Activated CD4-positive, alpha-beta T cell treated with anti-CD3 and anti-CD28 coated beads for 36 hours (primary cell): ENCODE measurements at regions of chr15 and their contacts with region 1.

Region 1: GRCh38 chr15:76139368-76140073 is 79.7 kb downstream of the TMEM266 start:
- DNase-seq: peak; percentile 88
- ATAC-seq: peak; percentile 94
- H3K4me3 Mint-ChIP-seq: no peak overlapping the region
- H3K27ac Mint-ChIP-seq: no peak overlapping the region
- H3K4me1 Mint-ChIP-seq: peaks cover 10% of the 10 kb centered on the region
- H3K27me3 Mint-ChIP-seq: peaks cover 25% of the 10 kb centered on the region

Region 2: DNA sequence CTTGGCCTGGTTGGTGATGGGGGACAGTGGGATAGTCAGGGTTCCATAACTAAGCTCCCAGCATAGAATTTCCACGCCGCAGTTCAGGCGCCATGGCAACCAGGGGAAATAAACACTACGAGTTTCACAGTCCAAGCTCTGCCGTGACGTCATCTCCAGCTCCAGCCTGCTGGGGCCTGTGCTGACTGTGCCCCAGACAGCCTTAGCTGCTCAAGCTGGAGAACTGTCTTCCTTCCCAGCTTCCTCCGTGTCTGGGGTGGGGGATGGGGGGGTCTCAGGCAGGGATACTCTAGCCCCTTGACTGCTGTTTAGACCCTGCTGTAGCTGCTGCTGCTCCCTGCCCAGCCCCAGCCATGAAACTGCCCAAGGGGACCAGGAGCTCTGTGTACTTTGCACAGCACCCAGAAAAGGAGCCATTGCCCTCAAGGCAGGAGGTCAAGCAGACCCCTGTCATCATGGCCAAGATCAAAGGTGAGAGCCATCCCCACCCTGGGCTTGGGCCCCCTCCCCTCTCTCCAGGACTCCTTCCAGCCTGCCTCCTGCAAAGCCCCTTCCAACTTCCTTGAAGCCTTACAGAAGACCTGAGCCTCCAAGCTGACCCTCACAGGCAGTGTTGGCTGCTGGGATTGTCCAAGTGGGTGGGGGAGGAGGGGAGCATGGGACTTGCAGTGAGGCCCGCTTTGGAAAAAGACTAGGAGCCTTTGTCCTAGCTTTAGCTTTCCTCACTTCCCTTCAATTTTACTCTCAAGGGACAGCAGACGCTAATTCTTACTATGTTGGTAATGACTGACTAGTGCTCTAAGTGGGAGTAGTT is 415.5 kb before region 1 on chr15:
- CTCF ChIA-PET with region 1: interaction called, 4 read pairs
- POLR2A ChIA-PET with region 1: no interaction called
- intact Hi-C with region 1: loop called in 1 of 2 experiments (anchors 2 kb)
- DNase-seq: peak; percentile 73
- ATAC-seq: peak; percentile 53
- H3K4me3 Mint-ChIP-seq: no peak overlapping the region
- H3K27ac Mint-ChIP-seq: no peak overlapping the region
- H3K4me1 Mint-ChIP-seq: peaks cover 8% of the 10 kb centered on the region
- H3K27me3 Mint-ChIP-seq: peaks cover 9% of the 10 kb centered on the region

Region 3: GRCh38 chr15:75809986-75810750 is 329.4 kb before region 1 on chr15:
- CTCF ChIA-PET with region 1: interaction called, 6 read pairs
- POLR2A ChIA-PET with region 1: no interaction called
- intact Hi-C with region 1: loop called in 1 of 2 experiments (anchors 1 kb)
- DNase-seq: peak; percentile 33
- ATAC-seq: no peak
- H3K4me3 Mint-ChIP-seq: no peak overlapping the region
- H3K27ac Mint-ChIP-seq: no peak overlapping the region
- H3K4me1 Mint-ChIP-seq: no peaks in the 10 kb centered on the region
- H3K27me3 Mint-ChIP-seq: no peaks in the 10 kb centered on the region

Region 4: DNA sequence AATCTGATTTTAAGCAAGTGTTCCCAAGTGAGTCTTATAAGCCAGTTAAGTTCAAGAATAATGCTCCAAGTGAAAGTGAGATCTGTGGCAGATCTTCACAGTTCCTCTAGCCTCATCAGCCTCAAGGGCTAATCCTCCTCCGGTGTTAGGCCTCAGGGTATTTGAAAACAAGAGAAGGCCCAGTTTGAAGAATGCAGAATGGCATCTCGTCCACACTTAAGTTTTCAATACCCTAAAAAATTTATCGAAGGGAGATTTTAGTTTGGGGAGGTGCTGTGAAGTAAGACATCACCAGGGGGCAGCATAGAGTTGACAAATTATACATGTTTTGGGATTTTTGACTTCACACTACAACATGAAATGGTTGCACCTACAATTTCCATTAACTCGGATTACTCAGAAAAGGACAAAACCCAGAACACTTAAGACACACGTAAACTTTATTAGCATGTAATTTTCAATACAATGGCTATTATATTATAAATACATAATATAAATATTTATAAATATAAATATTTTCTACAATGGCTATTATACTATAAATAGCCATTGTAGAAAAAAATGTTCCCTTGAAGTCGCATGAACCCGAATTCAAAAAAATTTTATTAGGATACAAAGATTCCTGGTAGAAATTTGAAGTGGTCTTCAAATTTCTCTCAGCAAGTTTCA is 82.1 kb before region 1 on chr15:
- CTCF ChIA-PET with region 1: interaction called, 168 read pairs
- POLR2A ChIA-PET with region 1: no interaction called
- intact Hi-C with region 1: loop called (anchors 1 kb)
- DNase-seq: peak; percentile 62
- ATAC-seq: peak; percentile 55
- H3K4me3 Mint-ChIP-seq: no peak overlapping the region
- H3K27ac Mint-ChIP-seq: no peak overlapping the region
- H3K4me1 Mint-ChIP-seq: peaks cover 23% of the 10 kb centered on the region
- H3K27me3 Mint-ChIP-seq: peaks cover 34% of the 10 kb centered on the region

Region 5: DNA sequence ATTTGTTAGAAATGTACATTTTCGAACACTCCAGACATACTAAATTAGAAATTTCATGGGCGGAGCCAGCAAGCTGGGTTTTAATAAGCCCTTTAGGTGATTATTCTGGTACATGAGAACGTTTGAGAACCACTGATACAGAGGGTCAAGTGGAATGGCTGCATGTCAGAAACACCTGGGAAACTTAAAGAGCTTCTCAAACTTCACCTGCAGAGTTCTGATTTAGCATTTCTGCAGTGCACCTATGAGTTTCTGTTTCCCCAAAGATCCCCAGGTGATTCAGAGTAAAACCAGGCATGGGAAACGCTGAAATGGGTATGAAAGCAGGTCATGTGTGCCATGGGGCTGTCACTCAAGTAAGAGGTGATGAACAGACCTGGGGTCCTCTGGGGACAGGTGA is 11.6 kb before region 1 on chr15:
- CTCF ChIA-PET with region 1: interaction called, 24 read pairs
- POLR2A ChIA-PET with region 1: no interaction called
- intact Hi-C with region 1: no loop called
- DNase-seq: no peak
- ATAC-seq: no peak
- H3K4me3 Mint-ChIP-seq: no peak overlapping the region
- H3K27ac Mint-ChIP-seq: no peak overlapping the region
- H3K4me1 Mint-ChIP-seq: no peaks in the 10 kb centered on the region
- H3K27me3 Mint-ChIP-seq: peaks cover 11% of the 10 kb centered on the region

Region 6: DNA sequence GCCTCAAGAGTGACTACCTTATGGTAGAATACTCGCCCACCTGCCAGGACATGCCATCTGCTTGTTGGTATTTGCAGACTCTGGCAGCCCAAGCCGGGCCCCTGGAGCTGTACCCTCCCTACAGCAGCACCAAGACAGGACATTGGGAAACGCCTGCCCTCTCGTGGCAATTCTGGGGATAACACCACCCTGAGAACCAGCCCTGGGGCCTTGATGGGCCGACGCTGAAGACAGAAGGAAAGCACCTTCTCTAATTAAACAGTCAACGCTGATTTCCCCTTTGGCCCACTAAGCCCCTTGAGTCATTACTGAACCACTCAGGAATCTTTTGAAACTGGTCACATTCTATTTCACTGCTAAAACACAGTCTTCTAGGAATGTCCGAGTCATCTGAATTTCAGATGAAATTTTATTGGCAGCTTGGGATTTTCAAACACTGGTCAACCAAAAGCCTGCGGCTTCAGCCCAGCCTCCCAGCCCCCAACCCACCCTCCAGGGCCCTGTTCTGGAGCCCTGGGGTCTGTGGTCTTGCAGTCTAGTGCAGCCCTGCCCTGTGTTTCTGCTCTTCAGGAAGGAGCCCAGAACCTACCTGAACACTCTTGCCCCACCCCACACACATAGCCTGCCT is 11.6 kb after region 1 on chr15:
- CTCF ChIA-PET with region 1: interaction called, 63 read pairs
- POLR2A ChIA-PET with region 1: interaction called, 6 read pairs
- intact Hi-C with region 1: no loop called
- DNase-seq: peak; percentile 90
- ATAC-seq: peak; percentile 93
- H3K4me3 Mint-ChIP-seq: no peak overlapping the region
- H3K27ac Mint-ChIP-seq: no peak overlapping the region
- H3K4me1 Mint-ChIP-seq: peaks cover 22% of the 10 kb centered on the region
- H3K27me3 Mint-ChIP-seq: peaks cover 8% of the 10 kb centered on the region